Dendritic cell treated with granulocyte-macrophage colony-stimulating factor and Interleukin-4, amounts not matched to agents 40 ng/mL and 50 ng/mL, for 4 days (primary cell): ENCODE measurements at regions of chr15 and their contacts with region 1.

Region 1: DNA sequence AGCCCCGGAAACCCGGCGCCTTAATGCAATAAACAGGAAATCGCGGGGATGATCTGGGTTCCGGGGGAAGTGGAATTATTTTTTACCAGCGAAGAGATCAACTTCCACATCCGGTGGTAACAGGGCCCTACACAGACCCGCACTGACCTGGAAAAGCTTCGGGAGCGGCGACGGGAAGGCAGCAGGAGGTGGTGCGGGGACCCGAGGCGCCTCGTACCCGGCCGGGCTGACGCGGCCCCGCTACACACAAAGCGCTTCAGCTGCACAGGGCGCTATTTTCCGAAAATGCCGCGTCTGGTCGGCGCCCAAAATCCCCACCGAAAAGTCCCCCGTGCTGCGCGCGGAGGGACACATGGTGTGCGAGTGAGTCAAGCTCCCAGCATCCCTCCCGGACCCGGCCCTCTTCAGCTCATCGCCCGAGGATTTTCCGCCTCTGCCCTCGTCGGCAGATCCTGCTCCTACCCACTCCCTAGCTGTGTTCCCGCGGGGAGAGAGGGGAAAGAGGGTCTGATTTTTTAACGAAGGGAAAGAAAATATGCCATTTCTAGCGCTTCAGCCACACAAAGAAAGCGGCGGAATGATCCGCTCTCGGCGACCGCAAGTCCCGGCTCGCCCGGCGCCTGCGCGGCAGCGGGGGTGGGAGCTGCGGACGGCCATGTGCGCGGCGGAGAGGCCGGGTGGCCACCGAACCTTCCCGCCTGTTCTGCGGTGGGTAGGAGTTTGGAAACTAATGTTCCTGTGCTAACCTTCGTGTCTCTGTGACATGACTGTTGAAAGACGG is at the start of gene GABPB1:
- H3K4me3 Mint-ChIP-seq: peak within 1 kb of the TSS; percentile 90
- H3K27ac Mint-ChIP-seq: peak within 1 kb of the TSS; percentile 99
- H3K4me1 Mint-ChIP-seq: peaks cover 52% of the 10 kb centered on the region
- H3K27me3 Mint-ChIP-seq: no peaks in the 10 kb centered on the region

Region 2: DNA sequence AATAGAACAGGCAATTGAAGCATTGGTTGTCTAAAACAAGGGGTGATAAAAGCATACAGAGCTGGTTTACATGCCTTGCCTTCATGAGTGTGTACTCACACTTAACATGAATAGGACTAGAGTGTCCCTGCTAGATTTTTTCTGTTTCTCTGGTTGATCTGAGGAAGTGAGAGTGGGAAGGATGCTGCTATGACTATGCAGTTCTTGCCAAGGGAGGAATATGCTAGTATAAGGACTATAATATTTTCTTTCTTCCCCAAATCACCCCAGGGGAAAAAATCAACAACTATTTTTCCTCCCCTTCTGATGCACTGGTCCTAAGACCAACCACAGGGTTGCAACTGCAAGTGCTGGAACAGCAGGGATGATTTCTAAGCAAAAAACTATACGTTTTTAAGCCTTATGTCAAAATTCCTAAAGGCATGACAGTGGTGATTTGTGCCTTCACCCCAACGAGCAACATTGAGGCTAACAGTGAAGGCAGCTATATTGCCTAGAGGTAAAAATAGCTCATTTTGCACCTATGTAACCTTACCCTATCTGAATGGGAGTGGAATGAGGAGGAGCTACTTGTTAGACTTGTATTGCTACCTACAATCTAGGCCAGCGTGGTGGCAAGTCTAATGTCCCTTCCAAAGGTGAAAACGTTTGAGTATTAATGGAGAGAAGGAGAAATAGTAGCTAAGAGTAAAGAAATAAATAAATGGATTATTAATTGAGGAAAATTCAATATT is 35.7 kb after region 1 on chr15:
- intact Hi-C with region 1: loop called (anchors 5 kb)
- H3K4me3 Mint-ChIP-seq: no peak overlapping the region
- H3K27ac Mint-ChIP-seq: peak overlapping the region; percentile 78
- H3K4me1 Mint-ChIP-seq: peaks cover 23% of the 10 kb centered on the region
- H3K27me3 Mint-ChIP-seq: no peaks in the 10 kb centered on the region

Region 3: DNA sequence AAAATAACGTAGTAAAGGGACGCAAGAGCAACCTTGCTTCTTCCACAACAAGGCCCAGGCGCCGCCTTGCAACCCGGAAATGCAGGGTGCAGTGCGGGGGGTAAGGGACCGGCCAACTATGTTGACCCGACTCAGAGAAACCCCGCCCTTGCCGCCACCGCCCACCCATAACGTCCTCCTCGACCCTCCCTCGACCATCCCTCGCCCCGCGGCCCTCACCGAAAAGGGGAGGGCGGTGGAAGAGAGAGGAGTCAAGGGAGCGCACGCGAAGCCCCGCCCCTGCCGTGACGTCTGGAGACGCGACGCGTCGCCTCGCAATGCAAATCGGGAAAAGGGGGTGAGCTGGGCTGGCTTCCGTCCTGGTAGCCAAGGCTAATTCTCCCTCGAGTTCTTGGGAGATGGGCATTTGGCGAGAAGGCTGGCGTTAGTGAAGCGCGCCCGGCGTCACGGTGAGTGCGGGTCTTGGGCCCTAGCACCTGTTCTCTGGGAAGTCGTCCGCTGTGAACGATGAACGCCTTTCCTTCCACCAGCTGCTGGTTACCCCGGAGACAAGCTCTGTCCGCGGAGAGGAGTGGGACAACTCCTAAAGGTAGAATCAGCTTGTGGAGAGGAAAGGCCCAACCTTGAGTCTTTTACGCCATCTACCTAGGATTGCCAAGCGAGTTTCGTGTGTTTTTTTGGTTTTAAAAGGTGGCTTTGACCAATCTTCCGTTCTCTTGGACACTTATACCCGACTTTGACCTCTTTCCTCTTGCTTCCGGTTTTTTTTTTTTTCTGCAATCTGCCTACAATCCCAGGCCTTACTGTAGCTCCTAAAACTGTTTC is 69.2 kb after region 1 on chr15 and contains the start of gene USP8:
- intact Hi-C with region 1: loop called (anchors 1 kb)
- H3K4me3 Mint-ChIP-seq: peak within 1 kb of the TSS; percentile 94
- H3K27ac Mint-ChIP-seq: peak within 1 kb of the TSS; percentile 96
- H3K4me1 Mint-ChIP-seq: peaks cover 29% of the 10 kb centered on the region
- H3K27me3 Mint-ChIP-seq: no peaks in the 10 kb centered on the region

Region 4: GRCh38 chr15:50876989-50877360 is 521.9 kb after region 1 on chr15:
- intact Hi-C with region 1: loop called (anchors 10 kb)
- H3K4me3 Mint-ChIP-seq: peak overlapping the region; percentile 58
- H3K27ac Mint-ChIP-seq: peak overlapping the region; percentile 77
- H3K4me1 Mint-ChIP-seq: peaks cover 65% of the 10 kb centered on the region
- H3K27me3 Mint-ChIP-seq: no peaks in the 10 kb centered on the region